T-cell (primary cell): ENCODE measurements at regions of chr1 and their contacts with region 1.

Region 1: DNA sequence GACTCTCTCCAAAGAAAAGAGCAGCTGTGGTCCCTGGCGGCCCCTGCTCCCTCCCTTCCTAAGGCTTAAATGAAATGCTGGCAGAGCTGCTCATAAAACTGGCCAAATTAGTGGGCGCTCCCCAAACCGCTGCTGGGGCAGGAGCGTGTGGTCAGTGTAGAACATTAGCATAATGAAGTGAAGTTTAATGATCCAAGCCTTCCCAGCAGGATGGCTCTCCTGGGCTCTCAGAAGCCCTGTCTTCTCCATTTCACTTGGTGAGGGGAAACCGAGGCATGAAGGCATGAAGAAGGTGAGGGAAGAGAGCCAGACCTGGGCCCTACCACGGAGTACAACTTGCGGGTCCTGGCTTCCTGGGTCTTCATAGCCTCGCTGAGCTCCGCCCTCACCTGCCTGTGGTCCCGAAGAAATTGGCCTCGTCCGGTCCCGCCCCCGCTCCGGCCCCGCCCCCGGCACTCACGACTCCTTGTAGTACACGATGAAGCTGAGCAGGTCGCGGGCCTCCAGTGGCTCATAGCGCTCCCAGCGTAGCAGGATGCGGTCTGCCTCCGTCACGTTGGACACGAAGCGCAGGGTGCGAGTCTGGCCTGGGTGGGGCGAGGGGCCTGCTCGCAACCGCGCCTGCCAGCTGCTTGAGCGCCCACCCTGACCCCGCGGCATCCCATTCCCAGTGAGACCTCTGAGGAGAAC is 10.3 kb downstream of the INSRR start:
- DNase-seq: peak; percentile 53 to 85 (median 76)
- ATAC-seq: peak; percentile 82 to 91 (median 88)
- H3K4me3 ChIP-seq: peak overlapping the region; percentile 17 to 18
- H3K4me3 Mint-ChIP-seq: peak overlapping the region; percentile 24 to 71 (median 56)
- H3K27ac ChIP-seq: peak overlapping the region; percentile 3
- H3K27ac Mint-ChIP-seq: peak overlapping the region; percentile 16 to 36
- H3K4me1 ChIP-seq: peaks cover 0 to 30% of the 10 kb centered on the region in 2 experiments
- H3K4me1 Mint-ChIP-seq: peaks cover 24 to 39% (median 39%) of the 10 kb centered on the region in 3 donors
- H3K27me3 ChIP-seq: peaks cover 10 to 65% of the 10 kb centered on the region in 2 experiments
- H3K27me3 Mint-ChIP-seq: peaks cover 9 to 41% of the 10 kb centered on the region in 2 donors

Region 2: GRCh38 chr1:156751758-156752757 is 96.5 kb before region 1 on chr1:
- CTCF ChIA-PET with region 1: interaction called in 1 of 2 experiments, 10 read pairs
- POLR2A ChIA-PET with region 1: no interaction called
- DNase-seq: peak; percentile 88 to 97 (median 95)
- ATAC-seq: peak; percentile 86 to 91 (median 88)
- H3K4me3 ChIP-seq: peak overlapping the region; percentile 92 to 94
- H3K4me3 Mint-ChIP-seq: peak overlapping the region; percentile 91 to 92 (median 92)
- H3K27ac ChIP-seq: peak overlapping the region; percentile 78
- H3K27ac Mint-ChIP-seq: peak overlapping the region; percentile 91 to 92
- H3K4me1 ChIP-seq: peaks cover 36 to 48% of the 10 kb centered on the region in 2 experiments
- H3K4me1 Mint-ChIP-seq: peaks cover 49 to 60% (median 56%) of the 10 kb centered on the region in 3 donors
- H3K27me3 ChIP-seq: no peaks in the 10 kb centered on the region
- H3K27me3 Mint-ChIP-seq: no peaks in the 10 kb centered on the region

Region 3: DNA sequence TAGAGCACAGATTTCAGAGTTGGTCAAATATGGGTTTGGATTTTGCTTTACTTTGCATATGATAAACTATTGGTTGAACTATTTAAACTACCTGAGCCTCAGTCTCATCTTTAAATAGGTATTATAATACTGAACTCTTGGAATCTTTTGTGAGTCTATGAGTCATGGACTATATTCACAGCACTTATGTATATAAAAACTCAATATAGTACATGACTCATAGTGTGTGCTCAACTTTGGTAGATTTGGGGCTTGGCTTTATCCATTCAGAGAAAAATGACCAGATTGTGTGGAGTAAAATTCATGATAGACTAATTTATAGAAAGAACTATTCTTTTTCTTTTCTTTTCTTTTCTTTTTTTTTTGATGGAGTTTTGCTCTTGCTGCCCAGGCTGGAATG is 823.3 kb after region 1 on chr1:
- CTCF ChIA-PET with region 1: no interaction called
- POLR2A ChIA-PET with region 1: no interaction called
- DNase-seq: no peak
- ATAC-seq: no peak
- H3K4me3 ChIP-seq: no peak overlapping the region
- H3K4me3 Mint-ChIP-seq: no peak overlapping the region
- H3K27ac ChIP-seq: no peak overlapping the region
- H3K27ac Mint-ChIP-seq: no peak overlapping the region
- H3K4me1 ChIP-seq: no peaks in the 10 kb centered on the region
- H3K4me1 Mint-ChIP-seq: no peaks in the 10 kb centered on the region
- H3K27me3 ChIP-seq: peaks cover 0 to 6% of the 10 kb centered on the region in 2 experiments
- H3K27me3 Mint-ChIP-seq: peaks cover 0 to 4% of the 10 kb centered on the region in 2 donors